CD8-positive, alpha-beta T cell (primary cell): ENCODE measurements at regions of chr5 and their contacts with region 1.

Region 1: GRCh38 chr5:151051066-151051930 is 29.5 kb downstream of the TNIP1 start:
- DNase-seq: peak; percentile 50 to 84 (median 76)
- ATAC-seq: peak; percentile 75
- H3K4me3 ChIP-seq: no peak overlapping the region
- H3K4me3 Mint-ChIP-seq: no peak overlapping the region
- H3K27ac ChIP-seq: no peak overlapping the region
- H3K27ac Mint-ChIP-seq: peak overlapping the region; percentile 22
- H3K4me1 ChIP-seq: peaks cover 4% of the 10 kb centered on the region
- H3K4me1 Mint-ChIP-seq: peaks cover 11% of the 10 kb centered on the region
- H3K27me3 ChIP-seq: no peaks in the 10 kb centered on the region
- H3K27me3 Mint-ChIP-seq: no peaks in the 10 kb centered on the region
- CTCF ChIP-seq: peak; percentile 72

Region 2: DNA sequence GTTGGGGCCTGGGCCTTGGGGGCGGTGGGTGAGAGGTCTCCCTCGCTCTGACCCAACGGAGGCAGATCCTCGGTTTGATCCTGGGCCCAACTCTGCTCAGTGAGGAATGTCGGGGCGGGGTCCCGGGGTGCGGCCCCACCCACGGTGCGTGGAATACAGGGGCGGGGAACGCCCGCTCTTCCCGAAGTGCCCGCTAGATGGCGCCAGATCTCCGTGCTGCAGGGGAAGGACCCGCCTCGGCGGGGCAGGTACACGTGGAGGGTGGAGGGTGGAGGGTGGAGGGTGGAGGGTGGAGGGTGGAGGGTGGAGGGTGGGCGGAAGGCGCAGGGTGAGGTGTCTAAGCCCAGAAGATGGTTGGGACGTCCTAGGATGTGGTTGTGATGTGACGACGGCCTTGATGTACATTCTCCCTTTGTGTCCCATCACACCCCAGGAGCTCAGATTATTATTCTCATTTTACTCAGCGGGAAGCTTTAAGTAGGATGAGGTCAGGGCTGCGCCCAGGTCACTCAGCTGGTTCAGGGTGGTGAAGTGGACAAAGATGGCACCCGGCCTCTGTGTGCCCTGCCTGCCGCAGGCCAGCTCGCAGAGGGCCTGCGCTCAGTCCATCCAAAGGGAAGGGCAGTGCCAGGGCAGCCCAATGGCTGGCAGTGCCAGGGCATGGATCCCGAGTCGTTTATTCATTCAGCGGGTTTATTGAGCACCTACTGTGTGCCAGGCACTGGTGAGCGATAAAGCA is 592.3 kb before region 1 on chr5:
- CTCF ChIA-PET with region 1: no interaction called
- POLR2A ChIA-PET with region 1: no interaction called
- intact Hi-C with region 1: loop called in 1 of 2 experiments (anchors 2 kb)
- DNase-seq: peak; percentile 73 to 93 (median 84)
- ATAC-seq: peak; percentile 93
- H3K4me3 ChIP-seq: no peak overlapping the region
- H3K4me3 Mint-ChIP-seq: peak overlapping the region; percentile 51
- H3K27ac ChIP-seq: peak overlapping the region; percentile 13 to 31
- H3K27ac Mint-ChIP-seq: peak overlapping the region; percentile 67
- H3K4me1 ChIP-seq: peaks cover 20% of the 10 kb centered on the region
- H3K4me1 Mint-ChIP-seq: peaks cover 37% of the 10 kb centered on the region
- H3K27me3 ChIP-seq: no peaks in the 10 kb centered on the region
- H3K27me3 Mint-ChIP-seq: no peaks in the 10 kb centered on the region
- CTCF ChIP-seq: peak; percentile 68

Region 3: GRCh38 chr5:151037561-151038411 is 13.5 kb before region 1 on chr5:
- CTCF ChIA-PET with region 1: interaction called, 18 read pairs
- POLR2A ChIA-PET with region 1: interaction called, 3 read pairs
- intact Hi-C with region 1: no loop called
- DNase-seq: no peak
- ATAC-seq: no peak
- H3K4me3 ChIP-seq: no peak overlapping the region
- H3K4me3 Mint-ChIP-seq: no peak overlapping the region
- H3K27ac ChIP-seq: no peak overlapping the region
- H3K27ac Mint-ChIP-seq: no peak overlapping the region
- H3K4me1 ChIP-seq: no peaks in the 10 kb centered on the region
- H3K4me1 Mint-ChIP-seq: no peaks in the 10 kb centered on the region
- H3K27me3 ChIP-seq: no peaks in the 10 kb centered on the region
- H3K27me3 Mint-ChIP-seq: no peaks in the 10 kb centered on the region
- CTCF ChIP-seq: no peak

Region 4: DNA sequence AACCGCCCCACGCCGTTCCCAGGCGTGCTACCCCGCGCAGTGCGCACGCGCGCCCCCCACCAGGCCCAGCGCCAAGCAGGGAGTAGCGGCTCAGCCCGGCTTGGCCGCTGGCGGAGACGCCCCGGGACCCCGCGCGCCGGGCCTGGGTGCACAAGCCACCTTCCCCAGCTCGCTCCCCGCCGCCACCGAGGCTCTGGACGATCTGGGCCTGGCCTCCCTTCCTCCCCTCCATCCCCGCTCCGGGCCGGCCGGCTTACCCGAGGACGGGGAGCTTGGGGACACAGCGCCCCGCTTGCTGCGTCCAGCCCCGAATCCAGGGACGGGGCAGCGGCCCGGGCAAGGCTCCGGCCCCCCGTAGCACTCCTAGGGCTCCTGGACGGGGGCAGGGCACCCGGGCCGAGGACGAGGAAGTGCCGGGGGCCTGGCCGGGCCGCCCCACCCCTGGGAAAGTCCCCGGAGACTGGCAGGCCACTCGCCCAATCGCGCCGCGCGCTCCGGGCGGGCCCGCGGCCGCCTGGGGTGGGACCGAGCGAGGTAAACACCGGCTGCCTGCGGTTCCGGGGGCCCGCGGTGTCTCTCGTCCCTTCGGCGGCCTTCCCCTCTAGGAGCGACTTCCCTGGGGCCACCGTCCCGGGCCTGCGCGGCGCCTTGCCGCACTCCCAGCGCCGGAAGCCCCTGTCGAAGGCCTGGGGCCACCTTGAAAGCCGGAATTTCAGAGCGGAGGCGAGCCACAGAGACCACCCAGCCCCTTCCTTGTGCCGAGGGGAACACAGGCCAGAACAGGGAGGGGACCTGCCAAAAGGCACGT is 29.5 kb after region 1 on chr5 and contains the start of gene TNIP1:
- CTCF ChIA-PET with region 1: interaction called, 33 read pairs
- POLR2A ChIA-PET with region 1: interaction called, 3 read pairs
- intact Hi-C with region 1: loop called in 1 of 2 experiments (anchors 2 kb)
- DNase-seq: peak; percentile 87 to 97 (median 94)
- ATAC-seq: peak; percentile 84
- H3K4me3 ChIP-seq: peak within 1 kb of the TSS; percentile 76
- H3K4me3 Mint-ChIP-seq: peak within 1 kb of the TSS; percentile 93
- H3K27ac ChIP-seq: peak within 1 kb of the TSS; percentile 70 to 98
- H3K27ac Mint-ChIP-seq: peak within 1 kb of the TSS; percentile 95
- H3K4me1 ChIP-seq: peaks cover 56% of the 10 kb centered on the region
- H3K4me1 Mint-ChIP-seq: peaks cover 80% of the 10 kb centered on the region
- H3K27me3 ChIP-seq: no peaks in the 10 kb centered on the region
- H3K27me3 Mint-ChIP-seq: no peaks in the 10 kb centered on the region
- CTCF ChIP-seq: no peak
- total RNA-seq, gene TNIP1: 133 to 134 TPM

Region 5: GRCh38 chr5:151126199-151126645 is 74.9 kb after region 1 on chr5:
- CTCF ChIA-PET with region 1: interaction called, 514 read pairs
- POLR2A ChIA-PET with region 1: no interaction called
- intact Hi-C with region 1: no loop called
- DNase-seq: peak; percentile 34 to 82 (median 66)
- ATAC-seq: peak; percentile 37
- H3K4me3 ChIP-seq: no peak overlapping the region
- H3K4me3 Mint-ChIP-seq: no peak overlapping the region
- H3K27ac ChIP-seq: peak overlapping the region; percentile 12 to 54
- H3K27ac Mint-ChIP-seq: peak overlapping the region; percentile 92
- H3K4me1 ChIP-seq: peaks cover 41% of the 10 kb centered on the region
- H3K4me1 Mint-ChIP-seq: peaks cover 54% of the 10 kb centered on the region
- H3K27me3 ChIP-seq: no peaks in the 10 kb centered on the region
- H3K27me3 Mint-ChIP-seq: no peaks in the 10 kb centered on the region
- CTCF ChIP-seq: peak; percentile 78

Region 6: GRCh38 chr5:151239237-151239861 is 188.1 kb after region 1 on chr5:
- CTCF ChIA-PET with region 1: interaction called, 7 read pairs
- POLR2A ChIA-PET with region 1: no interaction called
- intact Hi-C with region 1: loop called in 1 of 2 experiments (anchors 5 kb)
- DNase-seq: peak in 8 of 9 experiments; percentile 38 to 77 (median 63)
- ATAC-seq: peak; percentile 87
- H3K4me3 ChIP-seq: no peak overlapping the region
- H3K4me3 Mint-ChIP-seq: peak overlapping the region; percentile 57
- H3K27ac ChIP-seq: no peak overlapping the region
- H3K27ac Mint-ChIP-seq: no peak overlapping the region
- H3K4me1 ChIP-seq: peaks cover 23% of the 10 kb centered on the region
- H3K4me1 Mint-ChIP-seq: peaks cover 38% of the 10 kb centered on the region
- H3K27me3 ChIP-seq: no peaks in the 10 kb centered on the region
- H3K27me3 Mint-ChIP-seq: no peaks in the 10 kb centered on the region
- CTCF ChIP-seq: peak; percentile 100

Region 7: DNA sequence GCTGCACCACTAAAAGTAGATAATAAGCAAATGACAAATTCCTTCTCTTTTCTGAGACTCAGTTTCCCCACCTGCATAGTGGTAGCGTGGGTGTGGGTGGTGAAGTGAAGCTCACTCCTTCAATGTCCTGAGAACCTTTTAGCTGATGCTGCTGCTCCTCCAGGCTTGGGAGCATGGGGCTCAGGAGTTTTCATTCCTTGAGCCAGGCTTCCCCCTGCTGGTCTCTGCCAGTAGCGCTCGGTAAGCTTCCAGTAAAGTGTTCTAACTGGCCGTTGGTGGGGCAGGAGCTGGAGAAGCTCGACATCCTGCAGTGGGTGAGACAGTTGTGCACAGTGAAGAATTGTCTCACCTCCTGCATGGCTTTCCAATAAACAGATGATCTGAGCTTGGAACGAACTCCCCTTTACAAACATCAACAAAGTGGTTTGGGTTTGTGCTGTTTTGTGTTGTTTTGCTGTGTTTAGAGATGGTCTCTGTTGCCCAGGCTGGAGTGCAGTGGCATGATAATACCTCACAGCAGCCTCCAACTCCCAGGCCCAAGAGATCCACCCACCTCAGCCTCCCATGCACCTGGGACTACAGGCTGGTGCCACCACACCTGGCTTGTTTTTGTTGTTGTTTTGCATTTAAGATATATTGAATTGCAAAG is 600.8 kb after region 1 on chr5:
- CTCF ChIA-PET with region 1: no interaction called
- POLR2A ChIA-PET with region 1: no interaction called
- intact Hi-C with region 1: no loop called
- DNase-seq: peak; percentile 38 to 79 (median 56)
- ATAC-seq: peak; percentile 92
- H3K4me3 ChIP-seq: no peak overlapping the region
- H3K4me3 Mint-ChIP-seq: no peak overlapping the region
- H3K27ac ChIP-seq: no peak overlapping the region
- H3K27ac Mint-ChIP-seq: no peak overlapping the region
- H3K4me1 ChIP-seq: no peaks in the 10 kb centered on the region
- H3K4me1 Mint-ChIP-seq: peaks cover 5% of the 10 kb centered on the region
- H3K27me3 ChIP-seq: no peaks in the 10 kb centered on the region
- H3K27me3 Mint-ChIP-seq: no peaks in the 10 kb centered on the region
- CTCF ChIP-seq: peak; percentile 64